Mammary epithelial cell (primary cell): ENCODE measurements at regions of chr10 and their contacts with region 1.

Region 1: GRCh38 chr10:34637418-34637911 is 177.6 kb downstream of the PARD3 start:
- DNase-seq: peak; percentile 18
- H3K4me3 ChIP-seq: no peak overlapping the region
- H3K27ac ChIP-seq: no peak overlapping the region
- H3K4me1 ChIP-seq: peaks cover 5% of the 10 kb centered on the region
- H3K27me3 ChIP-seq: no peaks in the 10 kb centered on the region
- CTCF ChIP-seq: peak; percentile 97 to 98

Region 2: DNA sequence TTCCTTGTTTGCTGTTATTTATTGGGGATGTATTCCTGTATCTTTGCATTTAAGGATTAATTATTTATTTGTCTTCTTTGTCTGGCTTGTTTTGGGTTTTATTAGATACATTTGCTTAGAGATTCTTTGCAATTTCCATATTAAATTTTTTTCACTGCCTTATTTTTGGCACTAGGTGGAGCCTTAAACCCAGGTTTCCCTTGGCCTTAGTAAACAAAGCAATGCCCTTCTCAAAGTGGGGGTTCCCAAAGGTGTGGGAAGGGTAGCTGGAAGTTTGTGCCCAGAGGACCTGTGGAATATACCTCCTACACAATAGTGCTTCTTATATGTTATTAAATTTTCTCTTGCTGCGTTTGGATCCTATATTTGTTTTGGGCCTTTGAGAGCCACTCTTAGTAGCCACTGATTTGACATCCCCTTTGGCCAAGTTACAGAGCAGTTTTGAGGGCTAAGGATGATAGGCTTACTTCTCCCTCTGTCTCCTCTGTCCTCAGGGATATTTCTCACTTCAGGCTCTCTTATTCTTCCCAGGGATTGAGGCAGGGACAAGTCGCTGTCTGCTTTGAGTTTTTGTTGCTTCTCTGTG is 1841.8 kb before region 1 on chr10:
- CTCF ChIA-PET with region 1: no interaction called
- dilution Hi-C with region 1: no loop called
- in situ Hi-C with region 1: no loop called
- intact Hi-C with region 1: loop called (anchors 5 kb)
- DNase-seq: peak; percentile 17
- H3K4me3 ChIP-seq: no peak overlapping the region
- H3K27ac ChIP-seq: no peak overlapping the region
- H3K4me1 ChIP-seq: no peaks in the 10 kb centered on the region
- H3K27me3 ChIP-seq: no peaks in the 10 kb centered on the region
- CTCF ChIP-seq: peak; percentile 61 to 71

Region 3: DNA sequence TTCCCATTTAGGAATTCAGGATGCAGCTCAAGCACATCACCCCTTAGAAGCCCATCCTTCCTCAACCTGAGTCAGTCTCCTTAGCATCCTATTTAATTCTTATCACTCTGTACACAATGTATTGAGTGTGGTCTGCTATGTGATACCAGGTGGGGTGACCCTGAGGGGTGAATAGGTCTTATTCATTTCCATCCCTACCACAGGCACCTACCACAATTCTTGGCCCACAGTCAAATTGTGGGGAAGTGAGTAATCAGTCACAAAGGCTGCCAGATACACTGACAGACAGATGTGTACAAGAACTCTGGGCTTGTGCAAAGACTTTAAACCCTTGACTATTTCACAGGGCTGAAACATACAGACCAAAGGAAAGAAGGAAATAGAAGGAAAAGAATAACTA is 382.9 kb before region 1 on chr10:
- CTCF ChIA-PET with region 1: no interaction called
- dilution Hi-C with region 1: no loop called
- in situ Hi-C with region 1: no loop called
- intact Hi-C with region 1: loop called (anchors 10 kb)
- DNase-seq: peak; percentile 94
- H3K4me3 ChIP-seq: no peak overlapping the region
- H3K27ac ChIP-seq: no peak overlapping the region
- H3K4me1 ChIP-seq: peaks cover 22% of the 10 kb centered on the region
- H3K27me3 ChIP-seq: no peaks in the 10 kb centered on the region
- CTCF ChIP-seq: no peak

Region 4: DNA sequence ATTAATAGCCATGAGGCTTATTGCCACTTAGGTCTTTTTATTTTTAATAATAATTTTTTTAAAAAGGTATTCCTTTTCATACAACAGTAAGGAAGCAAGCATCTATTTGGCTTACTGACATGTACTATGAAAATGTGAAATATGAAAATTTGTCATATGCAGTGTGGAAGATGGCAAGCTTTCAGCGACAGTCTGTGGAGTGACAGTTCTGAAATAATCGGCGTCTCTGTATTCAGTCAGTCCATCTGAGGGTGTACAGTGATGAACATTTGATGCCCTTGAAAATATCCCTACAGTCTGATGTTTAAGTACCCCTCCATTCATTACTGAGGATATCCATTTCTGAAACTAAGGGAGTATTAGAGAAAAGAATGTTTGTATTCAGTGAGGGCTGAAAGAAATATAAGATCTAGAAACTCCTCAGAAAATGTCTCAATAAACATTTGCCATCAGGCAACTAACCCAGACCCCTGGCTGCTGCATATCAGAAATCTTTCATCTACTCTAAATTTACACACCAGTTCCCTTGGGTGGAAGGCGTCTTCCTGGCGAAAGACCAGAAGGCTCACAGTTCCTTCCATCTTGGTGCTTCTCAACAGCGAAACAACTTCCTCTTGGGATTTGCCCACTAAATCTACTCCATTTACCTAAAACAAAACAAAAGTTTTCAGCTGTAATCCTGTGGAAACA is 263.0 kb before region 1 on chr10:
- CTCF ChIA-PET with region 1: no interaction called
- dilution Hi-C with region 1: no loop called
- in situ Hi-C with region 1: no loop called
- intact Hi-C with region 1: loop called (anchors 10 kb)
- DNase-seq: no peak
- H3K4me3 ChIP-seq: no peak overlapping the region
- H3K27ac ChIP-seq: no peak overlapping the region
- H3K4me1 ChIP-seq: no peaks in the 10 kb centered on the region
- H3K27me3 ChIP-seq: no peaks in the 10 kb centered on the region
- CTCF ChIP-seq: no peak

Region 5: DNA sequence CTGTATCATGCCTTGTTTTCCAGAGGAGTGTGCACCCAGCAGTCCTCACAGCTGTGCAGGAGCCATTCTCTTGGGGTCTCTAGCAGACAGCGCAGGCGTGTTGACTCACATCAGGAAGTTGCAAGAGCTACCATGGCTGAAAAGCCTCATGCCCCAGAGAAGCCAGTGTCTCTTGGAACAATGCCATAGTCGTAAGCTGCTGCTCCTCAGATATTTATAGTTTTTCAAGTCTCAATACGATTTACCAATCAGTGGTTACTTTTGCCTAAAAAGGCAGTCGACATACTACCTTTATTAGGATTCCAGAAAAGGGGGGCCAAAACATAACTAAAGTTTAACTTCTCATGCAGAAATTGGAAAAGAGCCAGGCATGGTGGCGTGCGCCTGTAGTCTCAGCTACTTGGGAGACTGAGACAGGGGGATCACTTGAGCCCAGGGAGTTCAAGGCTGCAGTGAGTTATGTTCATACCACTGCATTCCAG is 230.1 kb before region 1 on chr10:
- CTCF ChIA-PET with region 1: no interaction called
- dilution Hi-C with region 1: no loop called
- in situ Hi-C with region 1: no loop called
- intact Hi-C with region 1: loop called (anchors 10 kb)
- DNase-seq: no peak
- H3K4me3 ChIP-seq: no peak overlapping the region
- H3K27ac ChIP-seq: no peak overlapping the region
- H3K4me1 ChIP-seq: peaks cover 16% of the 10 kb centered on the region
- H3K27me3 ChIP-seq: no peaks in the 10 kb centered on the region
- CTCF ChIP-seq: no peak

Region 6: GRCh38 chr10:34467902-34468301 is 169.6 kb before region 1 on chr10:
- CTCF ChIA-PET with region 1: no interaction called
- dilution Hi-C with region 1: no loop called
- in situ Hi-C with region 1: no loop called
- intact Hi-C with region 1: loop called (anchors 5 kb)
- DNase-seq: no peak
- H3K4me3 ChIP-seq: no peak overlapping the region
- H3K27ac ChIP-seq: no peak overlapping the region
- H3K4me1 ChIP-seq: peaks cover 2% of the 10 kb centered on the region
- H3K27me3 ChIP-seq: no peaks in the 10 kb centered on the region
- CTCF ChIP-seq: no peak

Region 7: GRCh38 chr10:34528320-34528719 is 109.1 kb before region 1 on chr10:
- CTCF ChIA-PET with region 1: no interaction called
- dilution Hi-C with region 1: no loop called
- in situ Hi-C with region 1: no loop called
- intact Hi-C with region 1: loop called (anchors 1 kb)
- DNase-seq: peak; percentile 91
- H3K4me3 ChIP-seq: peak overlapping the region in 1 of 3 experiments; percentile 9
- H3K27ac ChIP-seq: peak overlapping the region; percentile 90
- H3K4me1 ChIP-seq: peaks cover 41% of the 10 kb centered on the region
- H3K27me3 ChIP-seq: no peaks in the 10 kb centered on the region
- CTCF ChIP-seq: no peak